Activated CD4-positive, alpha-beta T cell treated with anti-CD3 and anti-CD28 coated beads, Interleukin-2, amount 10 ng/mL, durations not matched to agents 24 days and 14 days (primary cell): ENCODE measurements at regions of chr17 and their contacts with region 1.

Region 1: GRCh38 chr17:46121841-46122485 is 71.3 kb downstream of the KANSL1 start:
- DNase-seq: no peak
- H3K4me3 Mint-ChIP-seq: peak overlapping the region; percentile 21
- H3K27ac Mint-ChIP-seq: peak overlapping the region; percentile 31
- H3K4me1 Mint-ChIP-seq: peaks cover 59% of the 10 kb centered on the region
- H3K27me3 Mint-ChIP-seq: no peaks in the 10 kb centered on the region

Region 2: DNA sequence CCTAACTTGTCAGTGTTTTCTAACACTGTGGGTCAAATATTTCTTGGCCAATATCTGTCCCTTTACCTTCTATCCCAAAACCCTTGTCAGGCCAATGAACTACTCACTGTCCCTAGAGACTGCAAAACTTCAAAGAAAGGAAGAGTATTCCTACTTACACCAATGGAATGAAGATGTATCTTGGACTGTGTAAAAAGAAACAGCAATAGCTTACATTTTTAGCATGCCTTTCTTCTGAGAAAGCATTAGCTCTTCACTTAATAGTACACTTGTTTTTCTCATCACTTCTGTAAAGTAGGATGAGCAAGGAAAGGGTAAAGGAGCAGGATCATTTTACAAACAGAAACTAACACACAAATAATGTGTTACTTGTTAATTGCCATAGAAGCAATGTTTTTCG is 49.0 kb before region 1 on chr17:
- intact Hi-C with region 1: no loop called
- DNase-seq: no peak
- H3K4me3 Mint-ChIP-seq: no peak overlapping the region
- H3K27ac Mint-ChIP-seq: no peak overlapping the region
- H3K4me1 Mint-ChIP-seq: peaks cover 10% of the 10 kb centered on the region
- H3K27me3 Mint-ChIP-seq: no peaks in the 10 kb centered on the region

Region 3: DNA sequence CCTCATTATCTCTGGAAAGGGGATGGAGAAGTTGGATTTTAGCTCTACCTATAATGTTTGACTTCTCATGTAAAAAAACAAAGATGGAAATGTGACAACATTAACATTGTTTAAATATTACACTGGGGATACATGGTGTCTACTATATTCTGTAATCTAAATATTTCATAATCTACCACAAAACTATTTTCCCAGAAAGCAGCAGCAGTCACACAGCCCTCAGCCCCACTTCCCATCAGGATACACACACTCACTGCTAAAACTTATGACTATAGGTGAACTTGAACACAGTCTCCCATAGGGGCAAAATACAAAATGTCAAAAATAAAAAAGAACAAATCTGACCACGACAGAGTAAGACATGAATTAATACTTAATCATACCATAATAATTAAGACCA is 24.5 kb before region 1 on chr17:
- intact Hi-C with region 1: loop called (anchors 5 kb)
- DNase-seq: no peak
- H3K4me3 Mint-ChIP-seq: no peak overlapping the region
- H3K27ac Mint-ChIP-seq: no peak overlapping the region
- H3K4me1 Mint-ChIP-seq: peaks cover 42% of the 10 kb centered on the region
- H3K27me3 Mint-ChIP-seq: no peaks in the 10 kb centered on the region

Region 4: DNA sequence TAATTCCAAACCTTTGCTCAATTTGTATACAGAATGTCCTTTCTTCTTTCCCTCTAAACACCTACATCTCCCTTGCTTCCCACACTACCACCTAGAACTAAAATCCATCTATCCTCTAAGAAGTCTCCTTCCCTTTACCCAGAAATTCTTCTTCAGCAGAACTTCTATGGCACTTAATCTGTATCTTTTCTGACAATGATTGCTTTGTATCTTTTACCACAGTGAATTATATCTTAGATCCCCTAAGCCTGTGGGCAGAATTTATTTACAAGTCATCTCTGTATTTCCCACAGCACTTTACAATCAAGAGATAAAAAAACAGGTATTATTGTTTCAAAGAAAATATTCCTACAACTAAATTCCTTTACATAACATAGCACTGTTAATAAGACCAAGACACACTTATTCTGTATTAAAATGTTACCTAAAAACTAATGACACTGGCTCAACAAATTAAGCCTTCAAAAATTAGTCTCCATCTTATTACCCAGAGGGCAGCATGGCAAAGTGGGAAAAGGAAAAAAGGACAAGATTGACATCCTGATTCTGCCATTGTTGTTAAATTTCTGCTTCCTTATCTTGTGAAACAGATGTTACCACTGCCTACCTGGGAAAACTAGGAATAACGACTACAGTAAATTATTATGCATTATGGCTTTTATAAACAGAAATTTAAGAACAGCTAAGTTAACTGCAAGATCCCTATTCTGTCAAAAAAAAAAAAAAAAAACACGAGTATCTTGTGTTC is 28.4 kb after region 1 on chr17:
- intact Hi-C with region 1: no loop called
- DNase-seq: no peak
- H3K4me3 Mint-ChIP-seq: no peak overlapping the region
- H3K27ac Mint-ChIP-seq: no peak overlapping the region
- H3K4me1 Mint-ChIP-seq: peaks cover 64% of the 10 kb centered on the region
- H3K27me3 Mint-ChIP-seq: no peaks in the 10 kb centered on the region